ENCODE measurements at regions of chr2 and their contacts with region 1.

Region 1: GRCh38 chr2:236359426-236360045 is 95.3 kb upstream of the ASB18 start:
- DNase-seq: no peak
- ATAC-seq: no peak
- H3K4me3 ChIP-seq: no peak overlapping the region
- H3K27ac ChIP-seq: no peak overlapping the region
- H3K4me1 ChIP-seq: no peaks in the 10 kb centered on the region
- H3K27me3 ChIP-seq: no peaks in the 10 kb centered on the region
- CTCF ChIP-seq: no peak

Region 2: DNA sequence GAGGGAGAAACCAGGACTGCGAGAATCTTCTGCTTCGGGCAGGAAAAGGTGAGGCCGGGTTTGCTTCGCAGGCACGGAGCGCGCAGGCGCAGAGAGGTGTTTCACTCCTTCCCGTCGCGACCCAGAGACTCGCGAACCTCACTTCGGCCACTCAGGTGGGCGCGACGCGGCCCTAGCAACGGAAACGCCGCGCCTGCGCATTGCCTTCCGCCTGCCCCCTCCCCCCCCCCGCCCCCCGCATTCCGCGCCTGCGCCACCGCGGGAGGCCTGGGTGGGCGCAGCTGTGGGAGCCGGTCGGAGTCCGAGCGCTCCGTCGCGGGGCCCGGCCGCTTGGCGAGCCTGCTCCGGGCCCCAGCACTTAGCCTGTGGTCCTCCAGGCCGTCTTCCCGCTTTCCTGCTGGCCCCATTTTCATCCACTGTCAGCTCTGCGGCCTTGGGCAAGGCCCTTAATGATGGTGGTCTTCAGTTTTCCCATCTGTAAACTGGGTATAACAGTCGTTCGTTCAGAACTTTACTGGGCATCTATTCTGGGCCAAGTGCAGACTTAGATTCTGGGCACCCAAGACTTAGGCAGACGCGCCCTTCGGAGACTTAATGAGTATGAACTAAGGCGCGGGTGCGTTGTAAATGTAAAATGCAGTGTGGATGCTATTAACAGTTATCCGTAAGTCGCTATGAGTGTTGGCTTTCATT is 148.0 kb after region 1 on chr2:
- intact Hi-C with region 1: loop called in 1 of 2 experiments (anchors 5 kb)
- DNase-seq: peak; percentile 32 to 80 (median 76)
- ATAC-seq: peak; percentile 81
- H3K4me3 ChIP-seq: peak overlapping the region; percentile 17 to 28
- H3K27ac ChIP-seq: no peak overlapping the region
- H3K4me1 ChIP-seq: peaks cover 0 to 5% of the 10 kb centered on the region in 2 donors
- H3K27me3 ChIP-seq: peaks cover 12 to 46% of the 10 kb centered on the region in 2 donors
- CTCF ChIP-seq: no peak